ENCODE measurements at regions of chr10 and their contacts with region 1.

Region 1: DNA sequence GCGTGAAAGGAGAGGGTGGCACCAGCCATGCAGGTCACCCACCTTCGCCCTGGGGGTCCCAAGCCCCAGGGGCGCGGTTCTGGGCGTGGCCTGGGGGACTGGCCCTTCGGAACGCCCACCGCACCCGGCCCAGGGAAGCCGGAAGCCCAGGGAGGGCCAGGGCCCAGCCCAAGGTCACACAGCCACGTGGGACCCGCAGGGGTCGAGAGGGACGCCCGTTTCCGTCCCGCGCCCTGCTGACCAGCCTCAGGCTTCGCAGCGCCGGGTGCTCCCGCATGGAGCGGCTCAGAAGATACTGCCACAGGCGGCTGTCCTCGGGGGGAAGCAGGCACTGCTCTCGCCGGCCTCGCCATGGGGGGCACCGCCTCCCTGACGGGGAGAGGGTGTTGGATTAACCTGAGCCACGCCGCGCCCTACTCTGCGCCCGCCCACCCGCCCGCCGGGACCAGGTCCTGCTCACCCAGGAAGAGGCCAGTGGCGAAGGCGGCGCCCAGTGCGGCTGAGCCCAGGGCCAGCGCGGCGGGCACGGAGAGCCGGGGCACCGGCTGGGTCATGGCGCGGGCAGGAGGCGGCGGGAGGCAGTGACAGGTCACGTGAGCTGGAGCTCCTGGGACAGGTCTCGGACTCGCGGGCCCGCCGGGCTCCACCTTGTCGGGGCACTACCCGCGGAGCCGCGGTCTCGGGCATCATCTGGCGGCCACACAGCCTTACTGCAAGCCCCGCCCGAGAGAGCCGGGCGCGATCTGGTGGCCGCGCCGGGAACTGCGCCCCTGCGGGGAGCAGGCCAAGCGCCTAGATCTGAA is at the start of gene COMTD1:
- DNase-seq: peak; percentile 92 to 97
- ATAC-seq: peak; percentile 84 to 88 (median 86)
- H3K4me3 ChIP-seq: peak within 1 kb of the TSS; percentile 89
- H3K27ac ChIP-seq: peak within 1 kb of the TSS; percentile 91
- H3K4me1 ChIP-seq: no peaks in the 10 kb centered on the region
- H3K27me3 ChIP-seq: no peaks in the 10 kb centered on the region
- CTCF ChIP-seq: peak; percentile 100
- total RNA-seq, gene COMTD1: 15.2 to 38.8 (median 21.2) TPM

Region 2: GRCh38 chr10:74262856-74263255 is 972.7 kb before region 1 on chr10:
- intact Hi-C with region 1: loop called (anchors 5 kb)
- DNase-seq: no peak
- ATAC-seq: no peak
- H3K4me3 ChIP-seq: no peak overlapping the region
- H3K27ac ChIP-seq: no peak overlapping the region
- H3K4me1 ChIP-seq: no peaks in the 10 kb centered on the region
- H3K27me3 ChIP-seq: no peaks in the 10 kb centered on the region
- CTCF ChIP-seq: no peak

Region 3: GRCh38 chr10:75042292-75042974 is 193.1 kb before region 1 on chr10:
- intact Hi-C with region 1: loop called in 1 of 2 experiments (anchors 5 kb)
- DNase-seq: peak; percentile 53 to 83
- ATAC-seq: peak; percentile 92 to 95 (median 94)
- H3K4me3 ChIP-seq: no peak overlapping the region
- H3K27ac ChIP-seq: peak overlapping the region; percentile 87
- H3K4me1 ChIP-seq: peaks cover 50% of the 10 kb centered on the region
- H3K27me3 ChIP-seq: no peaks in the 10 kb centered on the region
- CTCF ChIP-seq: no peak

Region 4: DNA sequence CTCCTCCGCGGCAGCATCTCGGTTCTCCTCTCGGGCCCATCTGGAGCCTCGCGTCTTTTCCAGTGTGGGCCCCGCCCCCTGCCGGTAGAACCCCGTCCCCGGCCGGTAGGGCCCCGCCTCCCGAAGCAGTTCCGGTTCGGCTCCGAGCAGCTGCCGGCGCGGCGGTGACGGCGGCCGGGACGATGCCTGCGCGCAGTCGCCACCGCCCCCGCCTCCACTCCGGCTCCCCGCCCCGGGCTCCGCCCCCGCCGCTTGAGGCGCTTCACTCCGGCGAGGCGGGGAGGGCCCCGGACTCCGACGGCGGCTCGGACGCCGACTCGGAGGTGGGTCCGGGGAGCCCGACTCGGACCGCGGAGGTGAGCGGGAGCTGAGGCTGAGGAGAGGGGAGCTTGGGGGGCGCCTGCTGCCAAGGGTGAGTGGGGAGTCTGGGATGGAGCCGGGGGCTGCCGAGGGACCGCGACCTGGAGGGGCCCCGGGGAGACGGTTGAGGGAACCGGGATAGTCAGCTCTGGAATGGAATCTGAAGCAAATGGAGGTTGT is 124.1 kb before region 1 on chr10 and contains the start of gene SAMD8:
- intact Hi-C with region 1: loop called in 1 of 2 experiments (anchors 5 kb)
- DNase-seq: peak; percentile 98 to 99
- ATAC-seq: peak; percentile 75 to 80 (median 76)
- H3K4me3 ChIP-seq: peak within 1 kb of the TSS; percentile 88
- H3K27ac ChIP-seq: peak within 1 kb of the TSS; percentile 99
- H3K4me1 ChIP-seq: peaks cover 62% of the 10 kb centered on the region
- H3K27me3 ChIP-seq: no peaks in the 10 kb centered on the region
- CTCF ChIP-seq: peak; percentile 48
- total RNA-seq, gene SAMD8: 30.0 to 44.2 (median 35.7) TPM